Activated CD4-positive, alpha-beta memory T cell treated with anti-CD3 and anti-CD28 coated beads, Interleukin-2, amount 10 ng/mL, durations not matched to agents 7 days and 5 days (primary cell): ENCODE measurements at regions of chr4 and their contacts with region 1.

Region 1: DNA sequence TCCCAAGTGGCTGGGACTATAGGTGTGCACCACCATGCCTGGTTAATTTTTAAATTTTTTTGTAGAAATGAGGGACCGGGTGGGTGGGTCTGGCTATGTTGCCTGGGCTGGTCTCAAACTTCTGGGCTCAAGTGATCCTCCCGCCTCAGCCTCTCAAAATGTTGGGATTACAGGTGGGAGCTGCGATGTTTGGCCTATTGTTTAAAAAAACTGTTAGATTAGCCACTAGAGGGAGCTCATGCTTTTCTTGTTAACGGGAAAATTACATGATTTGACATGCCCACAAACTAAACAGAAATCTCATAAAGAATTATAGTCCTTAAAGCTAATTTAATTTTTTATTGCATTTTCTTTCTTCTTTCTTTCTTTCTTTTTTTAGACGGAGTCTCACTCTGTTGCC is 5.0 kb upstream of the SDAD1 start:
- DNase-seq: no peak
- H3K4me3 Mint-ChIP-seq: no peak overlapping the region
- H3K27ac Mint-ChIP-seq: no peak overlapping the region
- H3K4me1 Mint-ChIP-seq: peaks cover 12% of the 10 kb centered on the region
- H3K27me3 Mint-ChIP-seq: no peaks in the 10 kb centered on the region

Region 2: GRCh38 chr4:75752637-75753036 is 243.1 kb before region 1 on chr4:
- CTCF ChIA-PET with region 1: no interaction called
- POLR2A ChIA-PET with region 1: no interaction called
- DNase-seq: no peak
- H3K4me3 Mint-ChIP-seq: no peak overlapping the region
- H3K27ac Mint-ChIP-seq: no peak overlapping the region
- H3K4me1 Mint-ChIP-seq: no peaks in the 10 kb centered on the region
- H3K27me3 Mint-ChIP-seq: no peaks in the 10 kb centered on the region

Region 3: GRCh38 chr4:75844151-75844662 is 151.5 kb before region 1 on chr4:
- CTCF ChIA-PET with region 1: no interaction called
- POLR2A ChIA-PET with region 1: no interaction called
- DNase-seq: no peak
- H3K4me3 Mint-ChIP-seq: no peak overlapping the region
- H3K27ac Mint-ChIP-seq: no peak overlapping the region
- H3K4me1 Mint-ChIP-seq: peaks cover 12% of the 10 kb centered on the region
- H3K27me3 Mint-ChIP-seq: no peaks in the 10 kb centered on the region

Region 4: DNA sequence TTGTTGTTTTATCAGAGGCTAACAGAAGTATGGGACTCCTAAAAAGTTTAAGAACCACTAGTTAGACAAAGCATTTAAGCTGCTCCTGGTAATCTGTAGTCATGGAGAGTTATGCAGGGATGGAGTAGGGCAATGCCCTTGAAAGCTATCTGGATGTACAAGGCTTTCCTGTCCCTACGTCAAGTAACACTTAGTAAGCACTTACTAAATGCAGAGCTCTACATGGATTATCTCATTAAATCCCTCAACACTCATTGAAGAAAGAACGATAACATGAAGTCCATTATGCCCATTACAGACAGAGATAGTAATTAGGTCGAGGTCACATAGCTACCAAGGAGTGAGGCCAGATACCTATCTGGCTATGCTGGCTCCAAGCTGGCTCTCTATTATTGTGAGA is 126.6 kb before region 1 on chr4:
- CTCF ChIA-PET with region 1: no interaction called
- POLR2A ChIA-PET with region 1: no interaction called
- DNase-seq: no peak
- H3K4me3 Mint-ChIP-seq: no peak overlapping the region
- H3K27ac Mint-ChIP-seq: no peak overlapping the region
- H3K4me1 Mint-ChIP-seq: no peaks in the 10 kb centered on the region
- H3K27me3 Mint-ChIP-seq: no peaks in the 10 kb centered on the region

Region 5: GRCh38 chr4:76011700-76012387 is 16.1 kb after region 1 on chr4:
- CTCF ChIA-PET with region 1: interaction called, 16 read pairs
- POLR2A ChIA-PET with region 1: no interaction called
- DNase-seq: no peak
- H3K4me3 Mint-ChIP-seq: no peak overlapping the region
- H3K27ac Mint-ChIP-seq: no peak overlapping the region
- H3K4me1 Mint-ChIP-seq: peaks cover 19% of the 10 kb centered on the region
- H3K27me3 Mint-ChIP-seq: peaks cover 7% of the 10 kb centered on the region

Region 6: GRCh38 chr4:76061982-76062381 is 66.3 kb after region 1 on chr4:
- CTCF ChIA-PET with region 1: interaction called, 34 read pairs
- POLR2A ChIA-PET with region 1: interaction called, 4 read pairs
- DNase-seq: no peak
- H3K4me3 Mint-ChIP-seq: no peak overlapping the region
- H3K27ac Mint-ChIP-seq: no peak overlapping the region
- H3K4me1 Mint-ChIP-seq: peaks cover 45% of the 10 kb centered on the region
- H3K27me3 Mint-ChIP-seq: no peaks in the 10 kb centered on the region

Region 7: DNA sequence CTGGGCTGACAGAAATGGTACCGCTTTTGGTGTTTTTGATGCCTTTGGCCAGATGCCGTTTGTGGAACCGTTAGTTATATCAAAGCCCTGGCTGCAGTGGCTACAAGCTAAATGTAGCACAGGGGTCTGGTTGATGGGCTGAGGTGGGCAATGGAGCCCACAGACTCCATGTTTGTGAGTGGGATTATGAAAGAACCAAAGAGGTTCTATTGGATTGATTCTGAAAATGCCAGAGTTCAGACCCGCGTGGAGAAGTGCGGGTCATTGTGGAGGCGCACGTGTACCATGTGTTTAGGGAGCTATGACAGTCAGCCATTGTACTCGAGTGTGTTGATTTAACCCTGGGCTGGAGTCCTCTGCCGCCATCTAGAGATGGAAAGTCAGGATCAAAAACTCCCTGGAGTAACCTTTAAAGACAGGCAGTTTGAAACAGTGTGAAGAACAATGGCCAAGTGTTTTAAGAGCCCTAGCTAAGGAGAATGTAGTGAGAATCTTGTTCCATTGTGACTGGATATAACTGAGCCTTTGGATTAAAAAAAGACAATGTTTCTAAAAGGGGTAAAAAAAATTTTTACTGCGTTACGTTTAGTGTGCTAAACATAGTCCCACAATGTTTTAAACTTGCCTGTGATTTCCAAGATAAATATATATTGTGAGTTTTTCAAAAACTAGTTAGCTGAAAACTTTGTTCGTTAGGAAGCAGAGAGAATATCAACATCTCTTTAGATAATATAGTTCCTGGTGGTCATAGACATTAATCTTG is 91.5 kb after region 1 on chr4:
- CTCF ChIA-PET with region 1: interaction called, 11 read pairs
- POLR2A ChIA-PET with region 1: no interaction called
- DNase-seq: no peak
- H3K4me3 Mint-ChIP-seq: no peak overlapping the region
- H3K27ac Mint-ChIP-seq: no peak overlapping the region
- H3K4me1 Mint-ChIP-seq: peaks cover 11% of the 10 kb centered on the region
- H3K27me3 Mint-ChIP-seq: peaks cover 7% of the 10 kb centered on the region